ENCODE measurements at regions of chr1 and their contacts with region 1.

Region 1: GRCh38 chr1:11262171-11263049 is at the start of gene MTOR:
- DNase-seq: peak; percentile 98
- H3K4me3 Mint-ChIP-seq: peak within 1 kb of the TSS; percentile 85
- H3K27ac Mint-ChIP-seq: peak within 1 kb of the TSS; percentile 80
- H3K4me1 Mint-ChIP-seq: peaks cover 25% of the 10 kb centered on the region
- H3K27me3 Mint-ChIP-seq: no peaks in the 10 kb centered on the region
- total RNA-seq, gene MTOR: 32.9 to 36.2 TPM

Region 2: DNA sequence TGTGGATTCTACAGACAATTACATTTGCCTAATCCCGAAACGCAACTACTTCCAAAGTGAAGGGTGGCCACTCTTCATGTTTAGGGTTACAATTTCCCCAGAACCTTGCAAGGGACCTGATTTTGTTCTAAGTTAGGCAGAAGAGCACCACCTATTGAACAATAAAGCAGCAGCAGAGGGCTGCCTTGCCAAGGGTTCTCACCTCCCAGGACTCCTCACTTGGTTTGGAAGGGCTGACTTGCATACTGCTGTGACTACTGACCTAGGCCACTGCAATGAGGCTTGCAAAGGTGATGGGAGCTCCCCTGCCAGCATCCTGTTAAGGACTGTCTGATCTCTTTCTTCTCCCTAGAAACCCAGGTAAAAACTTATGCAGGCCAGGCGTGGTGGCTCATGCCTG is 14.3 kb before region 1 on chr1:
- CTCF ChIA-PET with region 1: interaction called, 14 read pairs
- POLR2A ChIA-PET with region 1: interaction called, 19 read pairs
- DNase-seq: no peak
- H3K4me3 Mint-ChIP-seq: no peak overlapping the region
- H3K27ac Mint-ChIP-seq: no peak overlapping the region
- H3K4me1 Mint-ChIP-seq: peaks cover 4% of the 10 kb centered on the region
- H3K27me3 Mint-ChIP-seq: no peaks in the 10 kb centered on the region

Region 3: DNA sequence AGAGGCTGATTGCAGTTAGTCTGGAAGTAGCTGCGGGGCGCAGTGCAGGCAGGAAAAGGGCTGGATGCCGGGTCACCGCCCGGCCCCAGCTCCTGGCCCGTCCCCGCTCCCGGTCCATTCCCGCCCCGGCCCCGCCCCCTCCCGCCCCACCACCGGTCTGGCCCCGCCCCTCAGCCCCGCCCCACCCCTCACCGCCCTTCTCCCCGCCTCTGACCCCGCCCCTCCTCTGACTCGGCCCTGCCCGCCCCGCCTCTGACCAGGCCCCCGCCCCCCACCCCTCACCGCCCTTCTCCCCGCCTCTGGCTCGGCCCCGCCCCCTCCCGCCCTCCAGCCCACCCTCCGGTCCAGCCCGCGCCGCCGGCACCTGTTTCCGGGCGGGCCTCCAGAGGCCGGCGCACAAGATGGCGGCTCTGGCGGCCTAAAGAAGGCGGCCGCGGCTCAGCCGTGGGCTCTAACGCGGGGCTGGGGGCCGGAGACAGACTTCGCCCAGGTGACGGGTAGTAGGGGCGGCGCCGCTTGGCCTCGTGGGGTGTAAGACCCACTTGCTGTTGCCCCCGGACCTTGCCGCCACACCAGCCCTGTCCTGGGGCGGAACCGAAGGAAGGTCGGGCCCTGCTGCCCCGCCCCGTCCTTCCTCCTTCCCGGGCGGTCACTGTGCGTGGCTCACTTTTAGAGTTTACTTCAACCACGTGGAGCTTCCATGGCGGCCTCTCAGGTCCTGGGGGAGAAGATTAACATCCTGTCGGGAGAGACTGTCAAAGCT is 10.6 kb after region 1 on chr1 and contains the start of gene UBIAD1:
- CTCF ChIA-PET with region 1: interaction called, 4 read pairs
- POLR2A ChIA-PET with region 1: interaction called, 59 read pairs
- DNase-seq: peak; percentile 86
- H3K4me3 Mint-ChIP-seq: peak within 1 kb of the TSS; percentile 91
- H3K27ac Mint-ChIP-seq: peak within 1 kb of the TSS; percentile 83
- H3K4me1 Mint-ChIP-seq: peaks cover 31% of the 10 kb centered on the region
- H3K27me3 Mint-ChIP-seq: peaks cover 1% of the 10 kb centered on the region
- total RNA-seq, gene UBIAD1: 19.9 TPM

Region 4: DNA sequence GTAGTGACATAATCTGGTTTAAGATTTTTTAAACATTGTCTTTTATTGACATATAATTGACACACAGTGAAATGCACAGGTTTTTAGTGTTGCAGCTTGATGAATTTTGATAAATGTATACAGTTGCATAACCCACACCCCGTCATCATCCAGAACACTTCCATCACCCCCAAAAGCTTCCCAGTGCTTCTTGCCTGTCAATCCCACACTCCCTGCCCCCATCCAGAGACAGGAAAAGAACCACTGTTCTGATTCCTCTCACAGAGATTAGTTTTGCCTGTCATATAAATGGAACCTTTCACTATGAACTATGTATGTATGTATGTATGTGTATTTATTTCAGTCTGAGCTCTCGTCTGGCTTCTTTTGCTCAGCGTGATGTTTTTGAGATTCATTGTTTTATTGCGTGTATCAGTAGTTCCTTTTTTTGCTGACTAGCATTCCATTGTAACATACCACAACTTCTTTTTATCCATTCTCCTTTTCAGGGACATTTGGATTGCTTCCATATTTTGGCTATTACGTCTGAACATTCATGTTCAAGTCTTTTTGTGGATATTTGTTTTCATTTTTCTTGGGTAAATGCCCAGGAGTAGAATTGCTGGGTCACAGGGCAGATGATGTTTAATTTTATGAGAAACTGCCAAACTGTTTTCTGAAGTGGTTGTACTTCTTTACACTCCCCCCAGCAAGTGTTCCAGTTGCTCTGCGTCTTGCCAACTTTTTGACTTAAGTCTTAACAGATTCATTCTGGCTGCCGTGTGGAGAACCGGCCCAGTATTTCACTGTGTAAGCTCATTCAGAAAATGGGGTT is 19.3 kb after region 1 on chr1:
- CTCF ChIA-PET with region 1: no interaction called
- POLR2A ChIA-PET with region 1: interaction called, 32 read pairs
- DNase-seq: no peak
- H3K4me3 Mint-ChIP-seq: no peak overlapping the region
- H3K27ac Mint-ChIP-seq: peak overlapping the region; percentile 80
- H3K4me1 Mint-ChIP-seq: peaks cover 77% of the 10 kb centered on the region
- H3K27me3 Mint-ChIP-seq: no peaks in the 10 kb centered on the region

Measured in activated CD4-positive, alpha-beta memory T cell treated with anti-CD3 and anti-CD28 coated beads, Interleukin-2, amount 10 ng/mL, durations not matched to agents 7 days and 5 days (primary cell).